ENCODE measurements at regions of chr10 and their contacts with region 1.

Region 1: DNA sequence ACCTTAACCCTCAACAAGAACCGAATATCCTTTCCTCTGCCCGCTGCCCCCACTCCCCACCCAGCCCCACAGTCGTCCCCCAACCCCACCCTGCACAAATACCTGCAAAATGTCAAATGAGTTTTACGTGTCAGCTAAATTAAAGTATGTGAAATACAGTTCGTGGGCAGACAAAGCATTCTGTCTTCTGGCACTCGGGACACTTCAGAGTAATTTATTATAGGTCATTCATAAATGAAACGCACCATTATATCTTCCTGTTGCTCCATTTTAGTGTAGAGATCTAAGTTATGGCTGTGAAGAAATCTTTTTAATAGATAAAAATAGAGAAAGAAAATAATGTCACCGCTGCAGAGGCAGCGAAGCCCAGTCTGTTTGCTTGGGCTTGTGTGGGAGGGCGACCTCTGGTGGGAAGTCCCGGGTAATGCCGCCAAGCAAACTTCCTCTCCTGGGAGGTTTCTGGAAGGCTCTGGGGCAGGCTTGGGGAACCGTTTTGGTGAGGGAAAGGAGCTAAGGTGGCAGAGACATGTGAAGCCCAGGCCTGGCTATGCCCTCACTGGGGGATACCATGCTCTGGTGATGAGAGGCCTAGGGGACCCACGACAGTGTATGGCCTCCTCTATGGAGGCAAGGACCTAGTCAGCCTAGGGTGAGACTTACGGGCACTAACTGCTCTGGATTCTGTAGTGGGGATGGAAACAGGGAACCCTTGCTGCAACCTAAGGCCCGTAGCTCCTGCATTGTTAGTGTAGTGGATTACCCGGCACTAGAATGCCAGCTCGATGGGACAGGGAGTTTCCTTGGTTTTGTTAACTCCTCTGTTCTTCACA is 604.9 kb downstream of the LRMDA start:
- DNase-seq: peak; percentile 81
- H3K4me3 ChIP-seq: peak overlapping the region in 1 of 2 experiments; percentile 45; a peak in 1 of 4 replicates
- H3K27ac ChIP-seq: no peak overlapping the region
- H3K4me1 ChIP-seq: peaks cover 0 to 27% of the 10 kb centered on the region in 2 experiments; a peak in 2 of 4 replicates
- H3K27me3 ChIP-seq: no peaks in the 10 kb centered on the region
- CTCF ChIP-seq: peak; percentile 91
- EP300 ChIP-seq: 0 out of 4 replicates have a peak, but pooled peaks of 1 of the 2 experiments have one; percentile 29
- RAD21 ChIP-seq: peak; percentile 95

Region 2: GRCh38 chr10:75514830-75515229 is 521.5 kb before region 1 on chr10:
- CTCF ChIA-PET with region 1: no interaction called
- POLR2A ChIA-PET with region 1: no interaction called
- DNase-seq: no peak
- H3K4me3 ChIP-seq: no peak overlapping the region
- H3K27ac ChIP-seq: no peak overlapping the region
- H3K4me1 ChIP-seq: peaks cover 0 to under 1% of the 10 kb centered on the region in 2 experiments; a peak in 2 of 4 replicates
- H3K27me3 ChIP-seq: no peaks in the 10 kb centered on the region
- CTCF ChIP-seq: no peak
- EP300 ChIP-seq: no peak
- RAD21 ChIP-seq: no peak

Region 3: DNA sequence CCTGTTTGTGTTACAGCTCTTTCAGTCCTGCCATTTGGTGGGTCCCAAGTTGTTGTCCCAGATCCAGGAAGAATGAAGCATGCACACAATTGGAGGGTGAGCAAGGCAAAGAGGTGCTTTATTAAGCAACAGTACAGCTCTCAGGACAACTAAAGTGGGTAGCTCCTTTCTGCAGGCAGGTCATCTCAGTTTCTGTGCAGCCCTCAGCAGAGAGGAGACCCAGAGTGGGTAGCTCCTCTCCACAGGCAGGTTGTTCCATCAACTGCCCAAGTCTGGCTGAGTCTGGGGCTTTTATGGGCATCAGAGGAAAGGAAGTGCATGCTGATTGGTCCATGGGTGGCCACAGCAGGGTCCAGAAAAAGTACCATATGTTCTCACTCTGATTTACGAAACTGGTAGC is 19.6 kb after region 1 on chr10:
- CTCF ChIA-PET with region 1: interaction called, 15 read pairs
- POLR2A ChIA-PET with region 1: no interaction called
- DNase-seq: no peak
- H3K4me3 ChIP-seq: no peak overlapping the region
- H3K27ac ChIP-seq: no peak overlapping the region
- H3K4me1 ChIP-seq: no peaks in the 10 kb centered on the region; a peak in 1 of 4 replicates
- H3K27me3 ChIP-seq: no peaks in the 10 kb centered on the region
- CTCF ChIP-seq: no peak
- EP300 ChIP-seq: no peak
- RAD21 ChIP-seq: no peak